ENCODE measurements at regions of chr2 and their contacts with region 1.

Region 1: DNA sequence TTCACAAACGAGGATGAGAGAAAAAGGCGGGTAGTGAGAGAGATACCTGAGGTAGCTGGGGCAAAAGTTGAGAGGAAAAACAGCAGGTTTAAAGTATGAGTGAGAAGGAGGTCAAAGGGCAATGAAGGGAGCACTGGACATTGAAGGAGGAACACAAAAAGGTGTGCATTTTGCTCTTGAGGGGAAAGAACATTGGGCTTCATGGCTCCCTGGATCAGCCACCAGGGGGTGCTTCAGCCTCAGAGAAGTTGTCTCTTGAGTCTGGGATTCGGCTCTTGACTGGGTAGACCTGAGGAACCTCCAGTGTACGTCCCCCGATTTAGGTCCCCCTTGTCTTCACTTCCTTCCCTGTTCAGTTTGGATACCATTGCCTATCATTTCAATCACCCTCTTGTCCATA is 128.5 kb downstream of the RAPGEF4 start:
- DNase-seq: no peak
- H3K4me3 ChIP-seq: no peak overlapping the region
- H3K27ac ChIP-seq: no peak overlapping the region
- H3K4me1 ChIP-seq: peaks cover 10% of the 10 kb centered on the region
- H3K27me3 ChIP-seq: no peaks in the 10 kb centered on the region
- CTCF ChIP-seq: peak; percentile 60 to 77

Region 2: GRCh38 chr2:172813314-172813888 is 50.8 kb before region 1 on chr2:
- CTCF ChIA-PET with region 1: interaction called, 10 read pairs
- dilution Hi-C with region 1: no loop called
- in situ Hi-C with region 1: no loop called
- intact Hi-C with region 1: loop called (anchors 1 kb)
- DNase-seq: no peak
- H3K4me3 ChIP-seq: no peak overlapping the region
- H3K27ac ChIP-seq: no peak overlapping the region
- H3K4me1 ChIP-seq: no peaks in the 10 kb centered on the region
- H3K27me3 ChIP-seq: no peaks in the 10 kb centered on the region
- CTCF ChIP-seq: peak; percentile 46 to 65

Region 3: GRCh38 chr2:172829229-172829628 is 35.0 kb before region 1 on chr2:
- CTCF ChIA-PET with region 1: no interaction called
- dilution Hi-C with region 1: no loop called
- in situ Hi-C with region 1: no loop called
- intact Hi-C with region 1: loop called (anchors 5 kb)
- DNase-seq: peak; percentile 34
- H3K4me3 ChIP-seq: no peak overlapping the region
- H3K27ac ChIP-seq: no peak overlapping the region
- H3K4me1 ChIP-seq: no peaks in the 10 kb centered on the region
- H3K27me3 ChIP-seq: no peaks in the 10 kb centered on the region
- CTCF ChIP-seq: no peak

Region 4: GRCh38 chr2:172836386-172836821 is 27.8 kb before region 1 on chr2:
- CTCF ChIA-PET with region 1: no interaction called
- dilution Hi-C with region 1: no loop called
- in situ Hi-C with region 1: no loop called
- intact Hi-C with region 1: loop called (anchors 2 kb)
- DNase-seq: peak; percentile 96
- H3K4me3 ChIP-seq: no peak overlapping the region
- H3K27ac ChIP-seq: peak overlapping the region; percentile 74
- H3K4me1 ChIP-seq: peaks cover 19% of the 10 kb centered on the region
- H3K27me3 ChIP-seq: no peaks in the 10 kb centered on the region
- CTCF ChIP-seq: no peak

Region 5: GRCh38 chr2:172905937-172906811 is 42.0 kb after region 1 on chr2:
- CTCF ChIA-PET with region 1: no interaction called
- dilution Hi-C with region 1: no loop called
- in situ Hi-C with region 1: no loop called
- intact Hi-C with region 1: no loop called
- DNase-seq: no peak
- H3K4me3 ChIP-seq: no peak overlapping the region
- H3K27ac ChIP-seq: no peak overlapping the region
- H3K4me1 ChIP-seq: no peaks in the 10 kb centered on the region
- H3K27me3 ChIP-seq: peaks cover 6% of the 10 kb centered on the region
- CTCF ChIP-seq: no peak

Region 6: GRCh38 chr2:172931918-172932520 is 67.8 kb after region 1 on chr2:
- CTCF ChIA-PET with region 1: interaction called, 3 read pairs
- dilution Hi-C with region 1: no loop called
- in situ Hi-C with region 1: no loop called
- intact Hi-C with region 1: loop called (anchors 1 kb)
- DNase-seq: no peak
- H3K4me3 ChIP-seq: no peak overlapping the region
- H3K27ac ChIP-seq: no peak overlapping the region
- H3K4me1 ChIP-seq: peaks cover 4% of the 10 kb centered on the region
- H3K27me3 ChIP-seq: no peaks in the 10 kb centered on the region
- CTCF ChIP-seq: peak; percentile 68 to 77

Region 7: GRCh38 chr2:172944022-172944793 is 80.0 kb after region 1 on chr2:
- CTCF ChIA-PET with region 1: no interaction called
- dilution Hi-C with region 1: no loop called
- in situ Hi-C with region 1: no loop called
- intact Hi-C with region 1: no loop called
- DNase-seq: peak; percentile 59
- H3K4me3 ChIP-seq: no peak overlapping the region
- H3K27ac ChIP-seq: no peak overlapping the region
- H3K4me1 ChIP-seq: no peaks in the 10 kb centered on the region
- H3K27me3 ChIP-seq: no peaks in the 10 kb centered on the region
- CTCF ChIP-seq: no peak

Region 8: DNA sequence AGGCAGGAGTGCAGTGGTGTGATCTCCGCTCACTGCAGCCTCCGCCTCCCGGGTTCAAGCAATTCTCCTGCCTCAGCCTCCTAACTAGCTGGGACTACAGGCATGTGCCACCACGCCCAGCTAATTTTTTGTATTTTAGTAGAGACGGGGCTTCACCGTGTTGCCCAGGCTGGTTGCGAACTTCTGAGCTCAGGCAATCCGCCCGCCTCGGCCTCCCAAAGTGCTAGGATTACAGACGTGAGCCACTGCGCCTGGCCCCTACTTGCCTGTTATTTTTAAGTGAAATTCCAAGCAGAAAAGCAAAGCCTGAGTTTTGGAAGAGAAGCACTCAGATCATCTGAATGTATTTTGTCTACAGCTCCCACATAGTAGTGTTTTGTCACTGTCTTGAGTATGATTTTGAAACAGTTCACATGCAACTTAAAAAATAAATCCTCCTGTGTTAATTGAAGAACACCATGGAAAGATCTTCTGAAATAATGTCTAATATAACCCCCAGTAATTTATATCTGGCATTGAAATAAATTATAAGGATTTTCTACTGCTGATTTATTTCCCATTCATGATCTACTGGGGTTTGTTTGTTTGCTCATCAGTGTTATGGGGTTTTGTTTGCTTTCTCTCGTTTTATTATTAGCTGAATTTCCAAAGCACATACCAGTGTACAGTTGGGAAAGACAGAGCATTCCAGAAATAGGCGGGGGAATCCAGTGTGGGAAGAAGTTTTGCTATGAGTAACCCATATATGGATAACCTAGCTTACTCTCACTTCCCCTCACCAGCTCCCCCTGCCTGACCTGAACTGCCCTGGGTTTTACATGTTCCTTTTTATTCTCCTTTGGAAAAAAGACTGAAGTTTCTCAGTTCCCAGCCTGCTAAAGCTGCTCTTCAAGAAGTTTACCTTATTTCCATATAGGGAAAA is 131.4 kb after region 1 on chr2:
- CTCF ChIA-PET with region 1: interaction called, 19 read pairs
- dilution Hi-C with region 1: no loop called
- in situ Hi-C with region 1: no loop called
- intact Hi-C with region 1: no loop called
- DNase-seq: peak; percentile 78
- H3K4me3 ChIP-seq: no peak overlapping the region
- H3K27ac ChIP-seq: peak overlapping the region; percentile 57
- H3K4me1 ChIP-seq: peaks cover 32% of the 10 kb centered on the region
- H3K27me3 ChIP-seq: no peaks in the 10 kb centered on the region
- CTCF ChIP-seq: peak; percentile 6 to 26

Region 9: DNA sequence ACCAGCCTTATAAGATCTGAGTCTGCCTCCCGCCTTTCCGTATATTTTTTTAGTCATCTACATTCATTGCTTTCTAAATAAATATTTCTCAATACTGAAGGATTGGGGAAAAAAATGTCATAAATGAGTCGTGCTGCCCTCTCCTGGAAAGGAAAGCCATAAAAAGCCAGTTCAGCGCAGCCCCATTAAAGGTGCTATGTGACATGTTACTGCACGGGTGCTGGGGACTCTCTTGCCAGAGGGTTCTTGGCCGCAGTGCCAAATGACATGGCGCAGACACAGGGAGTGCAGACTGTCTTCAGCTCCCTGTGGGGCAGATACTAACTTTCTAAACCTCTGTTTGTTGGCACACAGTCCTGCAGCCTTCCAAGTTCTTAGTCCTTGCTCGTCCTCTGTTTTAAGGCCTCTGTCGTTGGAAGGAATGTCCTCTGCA is 157.8 kb after region 1 on chr2:
- CTCF ChIA-PET with region 1: no interaction called
- dilution Hi-C with region 1: no loop called
- in situ Hi-C with region 1: no loop called
- intact Hi-C with region 1: loop called (anchors 1 kb)
- DNase-seq: peak; percentile 41
- H3K4me3 ChIP-seq: no peak overlapping the region
- H3K27ac ChIP-seq: no peak overlapping the region
- H3K4me1 ChIP-seq: no peaks in the 10 kb centered on the region
- H3K27me3 ChIP-seq: no peaks in the 10 kb centered on the region
- CTCF ChIP-seq: peak; percentile 55 to 61

Measured in mammary epithelial cell (primary cell).